K562 (cell line): ENCODE measurements at regions of chr1 and their contacts with region 1.

Region 1: DNA sequence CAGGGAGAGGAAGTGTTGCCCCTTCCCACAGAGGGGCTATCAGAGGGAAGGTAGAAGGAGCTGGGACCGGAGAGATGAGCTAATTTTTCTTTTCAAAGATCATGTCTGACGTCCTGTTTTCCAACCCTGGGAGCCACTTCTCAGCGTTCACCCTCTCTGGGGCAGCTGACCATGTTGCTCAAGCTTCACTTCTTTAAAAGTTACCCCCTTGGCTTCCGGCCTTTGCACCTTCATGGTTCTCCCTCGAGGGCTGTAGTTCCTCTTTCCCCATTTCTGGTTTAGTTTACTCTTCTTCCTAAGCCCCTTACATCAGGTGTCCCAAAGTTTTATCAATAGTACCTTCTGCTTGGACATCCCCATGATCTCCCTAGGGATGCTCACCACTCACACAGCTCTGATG is 23.8 kb upstream of the CSF1 start:
- DNase-seq: no peak
- ATAC-seq: no peak
- H3K4me3 ChIP-seq: no peak overlapping the region
- H3K27ac ChIP-seq: no peak overlapping the region
- H3K4me1 ChIP-seq: peaks cover 20 to 52% of the 10 kb centered on the region in 2 experiments
- H3K27me3 ChIP-seq: no peaks in the 10 kb centered on the region
- CTCF ChIP-seq: no peak
- EP300 ChIP-seq: no peak
- POLR2A ChIP-seq: no peak
- RAD21 ChIP-seq: no peak

Region 2: DNA sequence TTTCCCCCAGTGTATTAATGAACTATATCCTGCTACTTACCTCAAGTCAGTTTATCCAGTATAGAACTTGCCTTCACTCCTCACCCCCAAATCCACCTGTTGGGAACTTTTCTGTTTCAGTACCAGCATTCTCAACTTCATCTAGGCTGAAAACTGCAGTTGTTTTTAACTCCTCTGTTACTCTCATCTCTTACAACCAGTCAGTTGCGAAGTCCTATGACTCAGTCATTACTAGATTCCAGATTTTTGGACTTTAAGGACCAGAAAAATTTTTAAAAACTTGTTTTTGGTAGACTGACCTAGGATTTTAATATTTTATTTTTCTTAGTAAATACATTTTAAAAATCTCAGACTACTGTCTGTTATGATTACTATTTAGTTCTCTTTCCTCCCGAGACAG is 330.3 kb before region 1 on chr1:
- CTCF ChIA-PET with region 1: no interaction called
- POLR2A ChIA-PET with region 1: no interaction called
- in situ Hi-C with region 1: no loop called
- intact Hi-C with region 1: no loop called
- DNase-seq: no peak
- ATAC-seq: no peak
- H3K4me3 ChIP-seq: no peak overlapping the region
- H3K27ac ChIP-seq: no peak overlapping the region
- H3K4me1 ChIP-seq: peaks cover 0 to 10% of the 10 kb centered on the region in 2 experiments; a peak in 4 of 5 replicates
- H3K27me3 ChIP-seq: no peaks in the 10 kb centered on the region
- CTCF ChIP-seq: no peak
- EP300 ChIP-seq: no peak
- POLR2A ChIP-seq: no peak
- RAD21 ChIP-seq: no peak

Region 3: GRCh38 chr1:109790735-109791494 is 95.9 kb before region 1 on chr1:
- CTCF ChIA-PET with region 1: no interaction called
- POLR2A ChIA-PET with region 1: no interaction called
- in situ Hi-C with region 1: no loop called
- intact Hi-C with region 1: no loop called
- DNase-seq: peak; percentile 66 to 80 (median 74)
- ATAC-seq: peak; percentile 62
- H3K4me3 ChIP-seq: no peak overlapping the region
- H3K27ac ChIP-seq: peak overlapping the region; percentile 26; the same call in 2 of the 3 replicates
- H3K4me1 ChIP-seq: peaks cover 65 to 66% of the 10 kb centered on the region in 2 experiments
- H3K27me3 ChIP-seq: no peaks in the 10 kb centered on the region
- CTCF ChIP-seq: peak; percentile 70 to 85 (median 75)
- EP300 ChIP-seq: no peak
- POLR2A ChIP-seq: no peak
- RAD21 ChIP-seq: peak; percentile 62 to 67

Region 4: DNA sequence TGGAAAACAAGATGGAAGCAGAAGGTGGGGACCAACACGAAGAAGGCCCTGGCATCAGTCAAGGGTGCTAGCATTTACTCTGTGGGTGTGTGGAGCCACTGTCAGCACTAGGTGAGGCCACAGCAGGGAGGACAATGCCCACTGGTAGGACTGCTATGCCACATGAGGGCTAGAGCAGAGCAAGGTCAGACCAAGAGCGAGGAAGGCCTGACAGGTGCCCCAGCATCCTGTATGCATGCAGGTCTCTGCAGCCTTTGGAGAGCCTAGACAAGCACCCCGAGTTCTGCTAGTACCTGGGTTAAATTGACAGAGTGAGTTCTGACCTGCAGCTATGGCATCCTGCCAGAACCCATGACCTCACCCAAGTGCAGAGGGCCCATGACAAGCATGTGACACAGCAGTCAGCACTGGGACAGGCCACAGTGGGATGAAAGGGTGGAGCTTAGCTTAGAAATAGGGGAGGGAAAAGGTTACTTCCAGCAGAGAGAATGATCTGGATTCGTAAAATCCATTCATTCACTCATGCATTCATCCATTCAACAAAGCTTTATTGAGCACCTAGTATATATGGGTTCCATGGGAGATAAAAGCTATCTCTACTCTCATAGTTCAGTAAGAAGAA is 14.8 kb after region 1 on chr1:
- CTCF ChIA-PET with region 1: no interaction called
- POLR2A ChIA-PET with region 1: interaction called, 10 read pairs
- in situ Hi-C with region 1: no loop called
- intact Hi-C with region 1: no loop called
- DNase-seq: peak; percentile 91 to 95 (median 93)
- ATAC-seq: peak; percentile 95
- H3K4me3 ChIP-seq: no peak overlapping the region
- H3K27ac ChIP-seq: peak overlapping the region; percentile 49; the same call in 2 of the 3 replicates
- H3K4me1 ChIP-seq: peaks cover 24 to 48% of the 10 kb centered on the region in 2 experiments
- H3K27me3 ChIP-seq: no peaks in the 10 kb centered on the region
- CTCF ChIP-seq: no peak
- EP300 ChIP-seq: peak; percentile 82
- POLR2A ChIP-seq: no peak
- RAD21 ChIP-seq: peak in 1 of 2 experiments; percentile 9; a peak in 1 of 4 replicates

Region 5: DNA sequence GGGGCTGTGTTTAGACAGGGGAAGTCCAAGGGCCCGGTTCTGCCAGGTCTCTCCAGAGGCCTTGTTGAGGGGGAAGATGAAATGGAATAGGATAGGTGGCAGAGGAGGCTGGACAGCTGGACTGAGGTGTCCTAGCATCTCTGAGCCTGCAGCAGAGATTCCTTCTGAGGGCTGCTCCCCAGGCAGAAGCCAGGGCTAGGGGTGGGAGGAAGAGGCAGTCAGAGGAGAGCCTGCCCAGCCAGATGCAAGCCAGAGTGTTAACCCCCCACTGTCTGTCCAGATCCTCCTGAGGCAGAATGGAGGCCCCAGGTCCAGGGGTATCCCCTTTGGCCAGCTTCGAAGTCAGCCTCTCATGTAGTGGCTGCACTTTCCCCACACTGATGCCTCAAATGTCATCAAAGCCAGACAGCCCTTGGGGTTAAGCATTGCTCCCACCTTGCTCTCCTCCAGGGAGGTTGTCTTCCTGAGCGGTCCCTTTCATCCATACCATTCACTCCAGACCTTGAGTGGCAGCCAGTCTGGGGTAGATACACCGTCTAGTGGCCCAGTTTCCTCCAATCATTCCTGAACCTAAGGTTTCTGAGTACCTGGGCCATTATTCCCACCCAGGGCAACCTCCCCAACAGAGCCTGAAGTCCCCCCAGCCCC is 25.5 kb after region 1 on chr1:
- CTCF ChIA-PET with region 1: no interaction called
- POLR2A ChIA-PET with region 1: no interaction called
- in situ Hi-C with region 1: no loop called
- intact Hi-C with region 1: no loop called
- DNase-seq: no peak
- ATAC-seq: peak; percentile 2; the same call in 2 of the 3 replicates
- H3K4me3 ChIP-seq: no peak overlapping the region
- H3K27ac ChIP-seq: no peak overlapping the region
- H3K4me1 ChIP-seq: peaks cover 34 to 41% of the 10 kb centered on the region in 2 experiments
- H3K27me3 ChIP-seq: no peaks in the 10 kb centered on the region
- CTCF ChIP-seq: no peak
- EP300 ChIP-seq: no peak
- POLR2A ChIP-seq: no peak
- RAD21 ChIP-seq: no peak